ENCODE measurements at regions of chr7 and their contacts with region 1.

Region 1: GRCh38 chr7:151932358-151932876 is 23.8 kb upstream of the GALNTL5 start:
- DNase-seq: no peak
- H3K4me3 ChIP-seq: no peak overlapping the region
- H3K27ac ChIP-seq: peak overlapping the region in 3 of 8 donors; percentile 44 to 55 (median 48)
- H3K4me1 ChIP-seq: peaks cover 10 to 53% (median 40%) of the 10 kb centered on the region in 6 donors
- H3K27me3 ChIP-seq: no peaks in the 10 kb centered on the region
- CTCF ChIP-seq: no peak
- POLR2A ChIP-seq: no peak

Region 2: GRCh38 chr7:151782598-151783448 is 149.6 kb before region 1 on chr7:
- intact Hi-C with region 1: loop called (anchors 5 kb)
- DNase-seq: peak; percentile 95
- H3K4me3 ChIP-seq: peak overlapping the region in 5 of 8 donors; percentile 13 to 56 (median 27)
- H3K27ac ChIP-seq: peak overlapping the region in 4 of 8 donors; percentile 5 to 46 (median 22)
- H3K4me1 ChIP-seq: peaks cover 0 to 17% (median 12%) of the 10 kb centered on the region in 6 donors
- H3K27me3 ChIP-seq: no peaks in the 10 kb centered on the region
- CTCF ChIP-seq: peak; percentile 83 to 97 (median 94)
- POLR2A ChIP-seq: no peak

Region 3: GRCh38 chr7:151978616-151979015 is 46.2 kb after region 1 on chr7:
- intact Hi-C with region 1: no loop called
- DNase-seq: no peak
- H3K4me3 ChIP-seq: no peak overlapping the region
- H3K27ac ChIP-seq: no peak overlapping the region
- H3K4me1 ChIP-seq: no peaks in the 10 kb centered on the region
- H3K27me3 ChIP-seq: peaks cover 0 to 8% (median 0%) of the 10 kb centered on the region in 7 donors
- CTCF ChIP-seq: no peak
- POLR2A ChIP-seq: no peak

Measured in spleen (tissue), 13 donors.